Activated CD4-positive, alpha-beta memory T cell treated with anti-CD3 and anti-CD28 coated beads for 36 hours (primary cell): ENCODE measurements at regions of chr7 and their contacts with region 1.

Region 1: GRCh38 chr7:19754521-19755116 is 18.8 kb downstream of the TMEM196 start:
- DNase-seq: no peak
- H3K4me3 Mint-ChIP-seq: no peak overlapping the region
- H3K27ac Mint-ChIP-seq: no peak overlapping the region
- H3K4me1 Mint-ChIP-seq: no peaks in the 10 kb centered on the region
- H3K27me3 Mint-ChIP-seq: no peaks in the 10 kb centered on the region

Region 2: GRCh38 chr7:19558527-19558926 is 196.1 kb before region 1 on chr7:
- CTCF ChIA-PET with region 1: no interaction called
- POLR2A ChIA-PET with region 1: no interaction called
- intact Hi-C with region 1: no loop called
- DNase-seq: no peak
- H3K4me3 Mint-ChIP-seq: no peak overlapping the region
- H3K27ac Mint-ChIP-seq: no peak overlapping the region
- H3K4me1 Mint-ChIP-seq: no peaks in the 10 kb centered on the region
- H3K27me3 Mint-ChIP-seq: no peaks in the 10 kb centered on the region

Region 3: DNA sequence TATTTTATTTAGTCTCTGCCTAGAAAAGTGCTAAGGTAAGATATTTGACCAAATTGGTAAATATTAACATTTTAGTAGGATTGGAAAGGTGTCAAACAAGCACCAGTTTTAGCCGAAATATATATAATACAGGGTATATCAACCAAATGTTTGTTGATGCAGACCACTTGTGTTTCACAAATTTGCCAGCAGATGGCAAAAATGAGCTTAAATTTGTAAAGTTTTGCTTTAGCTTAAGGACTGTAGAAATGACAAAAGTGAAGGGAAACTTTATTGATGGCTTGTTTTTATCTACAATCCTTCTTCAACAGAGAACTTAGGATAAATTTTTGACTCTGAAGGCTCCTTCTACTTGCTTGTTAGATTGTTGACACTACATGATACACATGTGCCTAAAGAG is 40.9 kb before region 1 on chr7:
- CTCF ChIA-PET with region 1: interaction called, 10 read pairs
- POLR2A ChIA-PET with region 1: no interaction called
- intact Hi-C with region 1: no loop called
- DNase-seq: peak; percentile 39
- H3K4me3 Mint-ChIP-seq: no peak overlapping the region
- H3K27ac Mint-ChIP-seq: no peak overlapping the region
- H3K4me1 Mint-ChIP-seq: peaks cover 12% of the 10 kb centered on the region
- H3K27me3 Mint-ChIP-seq: peaks cover 4% of the 10 kb centered on the region

Region 4: GRCh38 chr7:20114468-20114867 is 359.8 kb after region 1 on chr7:
- CTCF ChIA-PET with region 1: no interaction called
- POLR2A ChIA-PET with region 1: no interaction called
- intact Hi-C with region 1: loop called (anchors 5 kb)
- DNase-seq: no peak
- H3K4me3 Mint-ChIP-seq: no peak overlapping the region
- H3K27ac Mint-ChIP-seq: no peak overlapping the region
- H3K4me1 Mint-ChIP-seq: no peaks in the 10 kb centered on the region
- H3K27me3 Mint-ChIP-seq: no peaks in the 10 kb centered on the region

Region 5: DNA sequence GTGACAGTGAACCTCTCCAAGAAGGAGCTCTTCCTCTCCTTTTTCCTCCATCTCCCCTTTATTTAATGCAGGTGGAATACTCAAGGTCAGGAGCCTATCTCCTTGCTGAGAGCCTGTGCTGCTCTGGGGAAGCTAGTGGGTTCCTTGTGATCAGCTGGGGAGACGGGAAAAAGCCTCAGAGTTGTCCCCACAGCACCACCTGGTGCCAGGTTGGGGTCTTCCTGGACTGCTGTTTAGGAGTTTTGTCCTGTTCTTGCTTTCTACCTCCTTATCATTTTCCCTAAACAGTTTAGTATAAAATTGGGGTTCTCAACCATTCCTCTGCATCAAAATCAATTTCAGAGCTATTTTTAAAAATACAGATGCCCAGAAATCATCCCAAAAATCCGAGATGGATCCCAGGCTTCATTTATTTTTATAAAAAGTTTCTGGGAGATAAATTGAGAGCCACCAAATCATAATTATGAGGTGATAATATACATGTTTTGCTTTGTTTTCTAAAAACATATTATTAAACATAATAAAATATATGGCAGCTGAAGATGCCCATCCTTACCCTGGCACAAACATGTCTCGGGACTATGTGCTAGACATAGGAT is 418.2 kb after region 1 on chr7:
- CTCF ChIA-PET with region 1: no interaction called
- POLR2A ChIA-PET with region 1: no interaction called
- intact Hi-C with region 1: loop called (anchors 1 kb)
- DNase-seq: peak; percentile 28
- H3K4me3 Mint-ChIP-seq: no peak overlapping the region
- H3K27ac Mint-ChIP-seq: no peak overlapping the region
- H3K4me1 Mint-ChIP-seq: no peaks in the 10 kb centered on the region
- H3K27me3 Mint-ChIP-seq: no peaks in the 10 kb centered on the region

Region 6: DNA sequence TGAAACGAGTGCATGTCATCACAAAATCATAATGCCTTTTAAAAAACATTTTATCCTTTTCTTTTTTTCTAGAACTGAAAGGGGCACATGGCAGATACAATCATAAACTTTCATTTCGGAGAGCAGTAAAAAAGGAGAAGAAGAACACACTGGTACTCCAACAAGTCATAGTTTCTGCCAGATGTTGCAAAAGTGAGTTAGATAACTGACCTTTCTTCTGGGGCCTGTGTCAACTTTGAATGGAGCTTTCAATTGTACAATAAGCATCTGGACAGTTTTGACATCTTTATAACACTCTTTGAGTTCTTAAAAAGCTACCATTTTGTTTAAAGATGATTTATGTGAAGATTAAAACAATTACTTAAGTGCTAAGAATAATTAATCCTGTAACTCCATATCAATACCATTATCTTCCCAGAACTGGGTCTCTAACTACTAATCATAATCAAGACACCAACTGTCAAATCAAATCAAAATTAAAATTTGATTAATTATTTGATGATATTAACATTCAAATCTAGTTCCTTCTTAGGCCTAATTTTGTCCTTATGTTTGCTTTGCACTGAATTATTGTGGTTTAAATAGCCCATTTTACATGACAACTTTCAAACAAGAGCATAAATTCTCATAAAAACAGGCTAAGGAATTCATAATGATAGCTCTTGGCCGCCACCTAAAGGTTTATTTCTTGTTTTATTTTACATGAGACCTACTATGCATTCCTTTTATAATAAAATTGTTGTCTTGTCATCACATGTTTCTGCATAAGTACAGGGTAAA is 556.5 kb after region 1 on chr7:
- CTCF ChIA-PET with region 1: interaction called, 3 read pairs
- POLR2A ChIA-PET with region 1: no interaction called
- intact Hi-C with region 1: loop called (anchors 2 kb)
- DNase-seq: no peak
- H3K4me3 Mint-ChIP-seq: no peak overlapping the region
- H3K27ac Mint-ChIP-seq: no peak overlapping the region
- H3K4me1 Mint-ChIP-seq: no peaks in the 10 kb centered on the region
- H3K27me3 Mint-ChIP-seq: no peaks in the 10 kb centered on the region

Region 7: DNA sequence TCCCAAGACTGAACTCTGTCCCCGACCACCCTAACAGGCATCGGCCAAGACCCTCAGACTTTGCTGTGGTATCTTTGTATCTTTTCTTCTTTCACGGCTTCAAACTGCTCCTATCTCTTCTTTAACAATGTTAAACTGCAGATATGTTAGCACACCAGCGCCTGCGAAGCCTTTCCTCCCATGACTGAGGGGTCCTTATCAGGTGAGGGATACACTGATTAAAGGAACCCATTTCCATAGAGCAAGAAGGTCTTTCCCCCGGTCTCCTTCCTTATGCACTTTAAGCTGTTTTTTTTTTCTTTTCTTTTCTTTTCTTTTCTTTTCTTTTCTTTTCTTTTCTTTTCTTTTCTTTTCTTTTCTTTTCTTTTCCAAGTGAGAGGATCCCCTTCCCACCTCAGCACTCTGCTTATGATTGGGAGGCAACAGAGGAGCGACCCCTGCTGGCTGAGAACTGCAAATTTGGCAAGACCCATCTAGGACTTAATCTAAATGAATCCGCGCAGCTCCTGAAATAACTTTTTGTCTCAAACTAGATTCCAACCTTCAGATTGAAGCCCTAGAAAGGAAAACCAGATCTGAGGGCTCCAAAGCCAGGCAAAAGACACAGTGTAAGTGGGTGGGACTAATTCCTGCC is 686.0 kb after region 1 on chr7:
- CTCF ChIA-PET with region 1: no interaction called
- POLR2A ChIA-PET with region 1: no interaction called
- intact Hi-C with region 1: loop called (anchors 10 kb)
- DNase-seq: peak; percentile 30
- H3K4me3 Mint-ChIP-seq: no peak overlapping the region
- H3K27ac Mint-ChIP-seq: no peak overlapping the region
- H3K4me1 Mint-ChIP-seq: no peaks in the 10 kb centered on the region
- H3K27me3 Mint-ChIP-seq: no peaks in the 10 kb centered on the region

Region 8: DNA sequence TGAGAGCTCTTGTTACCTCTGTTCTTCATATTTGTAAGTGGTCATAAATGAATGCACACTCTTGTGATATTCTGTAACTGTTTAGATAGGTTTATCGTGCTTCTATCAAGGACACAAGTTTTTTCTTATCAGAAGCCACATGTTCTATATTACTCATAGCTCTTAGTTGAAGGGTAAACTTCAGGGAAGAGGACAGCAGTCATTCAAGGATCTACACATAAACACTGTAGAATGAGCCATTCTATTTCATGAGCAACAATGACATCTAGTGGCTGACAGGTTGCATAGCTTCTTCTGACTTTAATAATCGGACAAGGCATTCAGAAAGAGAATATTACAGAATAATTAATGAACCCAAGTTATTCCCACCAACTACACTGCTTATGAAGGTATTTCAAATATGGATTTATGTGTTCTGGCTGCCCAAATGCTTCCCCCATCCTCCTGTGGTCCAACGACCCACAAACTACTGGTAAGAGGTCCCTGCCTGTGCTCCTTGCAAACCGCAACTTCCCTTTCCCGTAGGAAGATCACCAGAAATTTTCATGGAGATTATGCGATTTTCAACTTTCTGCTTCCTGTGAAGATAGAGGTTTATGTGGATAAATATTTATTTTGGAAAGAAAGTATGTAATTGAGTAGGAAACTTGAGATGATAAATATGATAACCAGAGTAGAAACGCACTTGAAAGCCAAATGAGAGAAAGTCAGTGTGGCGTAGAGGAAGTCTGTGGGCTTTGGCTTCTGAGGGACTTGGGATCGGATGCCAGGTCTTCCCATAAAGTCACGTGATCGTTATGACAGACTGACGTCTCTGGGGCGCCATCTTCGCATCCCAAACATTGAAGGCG is 844.1 kb after region 1 on chr7:
- CTCF ChIA-PET with region 1: interaction called, 16 read pairs
- POLR2A ChIA-PET with region 1: no interaction called
- intact Hi-C with region 1: loop called (anchors 1 kb)
- DNase-seq: no peak
- H3K4me3 Mint-ChIP-seq: no peak overlapping the region
- H3K27ac Mint-ChIP-seq: no peak overlapping the region
- H3K4me1 Mint-ChIP-seq: no peaks in the 10 kb centered on the region
- H3K27me3 Mint-ChIP-seq: peaks cover 12% of the 10 kb centered on the region